ENCODE measurements at regions of chr9 and their contacts with region 1.

Region 1: GRCh38 chr9:94545940-94546339 is 8.9 kb upstream of the PCAT7 start:
- DNase-seq: no peak
- ATAC-seq: no peak

Region 2: DNA sequence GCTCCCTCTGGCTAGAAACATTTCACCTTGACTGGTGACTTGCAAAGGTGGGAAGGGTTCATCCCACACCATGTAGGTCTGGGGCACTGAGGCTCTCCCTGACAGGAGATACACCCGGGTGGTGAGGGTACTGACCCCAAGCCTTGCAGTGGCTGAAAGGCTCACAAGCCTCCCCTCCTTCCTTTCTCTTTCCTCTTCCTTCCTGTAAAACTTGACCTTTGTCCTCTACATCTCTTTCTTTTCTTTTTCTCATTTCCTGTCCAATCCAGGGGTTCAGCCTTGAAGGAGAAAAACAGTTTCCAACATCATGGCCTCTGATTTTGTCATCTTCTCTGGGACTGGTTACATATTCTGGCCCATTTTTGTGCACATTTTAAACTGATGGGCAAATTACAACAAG is 31.1 kb after region 1 on chr9:
- intact Hi-C with region 1: loop called (anchors 1 kb)
- DNase-seq: no peak
- ATAC-seq: no peak